ENCODE measurements at regions of chr5 and their contacts with region 1.

Region 1: DNA sequence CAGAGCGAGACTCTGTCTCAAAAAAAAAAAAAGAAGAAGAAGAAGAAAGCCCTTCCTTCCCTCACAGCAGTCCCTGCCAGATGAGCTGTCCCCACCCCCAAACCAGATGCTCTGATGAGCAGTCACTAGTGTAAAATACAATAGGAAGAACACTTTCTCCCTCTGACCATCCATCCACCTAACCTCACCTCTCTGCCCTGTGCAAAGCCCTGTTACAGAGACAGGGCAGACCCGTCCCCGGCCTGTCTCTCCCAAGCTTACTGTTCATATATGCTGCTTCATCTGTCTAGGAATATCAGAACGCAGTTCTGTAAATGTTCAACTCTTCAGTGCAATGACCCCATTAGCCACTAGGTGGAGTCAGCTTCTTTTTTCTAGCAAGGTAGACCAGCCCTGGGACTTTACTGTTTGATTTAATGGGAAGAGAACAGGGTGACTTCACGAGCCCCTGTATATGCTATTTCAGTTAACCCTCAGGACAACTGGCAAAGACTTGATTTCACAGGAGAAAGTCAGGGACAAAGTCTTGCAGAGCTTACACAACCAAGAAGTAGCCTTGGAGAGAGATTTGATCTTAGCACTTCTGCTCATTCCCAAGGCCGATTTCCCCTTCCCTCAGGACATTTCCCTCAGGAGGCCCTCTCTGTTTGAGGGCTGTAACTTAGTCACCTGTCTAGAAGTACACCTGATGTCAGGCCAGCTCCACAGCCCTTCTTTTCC is 14.9 kb upstream of the FGFR4 start:
- DNase-seq: peak; percentile 42
- H3K4me3 ChIP-seq: peak overlapping the region; percentile 30; the same call in 1 of the 2 replicates
- CTCF ChIP-seq: peak; percentile 72

Region 2: DNA sequence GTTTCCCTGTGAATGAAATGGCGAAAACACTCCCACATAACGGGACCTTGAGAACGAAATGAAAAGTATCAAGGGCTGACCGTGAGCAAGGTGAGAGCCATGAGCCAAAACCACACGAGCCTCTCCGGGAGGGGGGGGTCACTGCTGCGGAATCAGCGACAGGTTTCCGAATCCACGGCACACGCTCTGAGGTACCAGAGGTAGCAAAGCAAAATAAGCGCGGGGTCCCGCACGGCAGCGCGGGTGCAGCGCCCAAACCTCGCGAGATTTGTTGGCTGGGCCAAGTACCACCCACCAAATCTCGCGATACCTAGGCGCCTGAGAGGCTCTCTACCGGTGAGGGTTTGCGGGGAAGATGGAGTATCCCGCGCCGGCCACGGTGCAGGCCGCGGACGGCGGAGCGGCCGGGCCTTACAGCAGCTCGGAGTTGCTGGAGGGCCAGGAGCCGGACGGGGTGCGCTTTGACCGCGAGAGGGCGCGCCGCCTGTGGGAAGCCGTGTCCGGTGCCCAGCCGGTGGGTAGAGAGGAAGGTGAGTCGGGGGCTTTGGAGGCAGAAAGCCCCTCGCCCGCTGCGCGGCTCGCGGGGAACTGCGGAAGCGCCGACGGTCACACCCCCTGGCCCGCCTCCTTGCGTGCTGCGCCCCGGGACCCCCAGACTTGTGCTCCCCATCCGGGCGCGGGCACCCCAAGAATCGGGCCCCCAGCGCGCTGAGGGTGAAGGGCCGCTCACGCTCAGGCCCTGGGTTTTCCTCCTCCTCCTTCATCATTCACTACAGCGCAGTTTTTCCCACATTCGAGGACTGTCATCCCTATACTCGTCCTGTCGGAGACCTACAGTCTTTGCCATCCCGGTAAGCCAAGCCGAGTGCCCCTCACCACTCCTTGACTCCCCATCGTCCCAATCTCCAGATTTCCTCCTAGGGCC is 49.2 kb before region 1 on chr5 and contains the start of gene ZNF346:
- CTCF ChIA-PET with region 1: interaction called, 14 read pairs
- POLR2A ChIA-PET with region 1: no interaction called
- DNase-seq: no peak
- H3K4me3 ChIP-seq: peak within 1 kb of the TSS; percentile 93
- CTCF ChIP-seq: peak; percentile 38

Region 3: GRCh38 chr5:177043958-177044357 is 27.9 kb before region 1 on chr5:
- CTCF ChIA-PET with region 1: interaction called, 16 read pairs
- POLR2A ChIA-PET with region 1: no interaction called
- DNase-seq: no peak
- H3K4me3 ChIP-seq: no peak overlapping the region
- CTCF ChIP-seq: no peak

Region 4: DNA sequence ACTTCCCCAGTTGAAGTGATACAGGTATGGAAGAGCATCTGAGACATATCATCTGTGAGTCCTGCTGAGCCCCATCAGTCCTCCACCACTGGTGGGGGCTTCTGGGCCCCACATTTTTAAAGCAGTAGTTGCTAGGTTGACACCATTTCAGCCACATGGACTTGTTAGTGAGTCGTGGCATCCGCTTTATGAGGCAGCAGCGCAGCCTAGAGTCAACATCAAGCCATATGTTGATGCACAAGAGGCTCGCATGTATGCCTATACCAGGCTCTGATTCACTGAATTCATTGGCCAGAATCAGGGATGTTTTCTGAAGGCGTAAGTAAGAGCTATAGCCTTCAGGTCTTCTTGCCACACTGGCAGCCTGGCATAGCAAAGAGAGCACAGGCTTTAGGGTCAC is 22.5 kb before region 1 on chr5:
- CTCF ChIA-PET with region 1: interaction called, 18 read pairs
- POLR2A ChIA-PET with region 1: no interaction called
- DNase-seq: no peak
- H3K4me3 ChIP-seq: no peak overlapping the region
- CTCF ChIP-seq: no peak

Region 5: GRCh38 chr5:177086924-177087706 is 15.3 kb after region 1 on chr5:
- CTCF ChIA-PET with region 1: interaction called, 189 read pairs
- POLR2A ChIA-PET with region 1: no interaction called
- DNase-seq: no peak
- H3K4me3 ChIP-seq: peak overlapping the region; percentile 49
- CTCF ChIP-seq: peak; percentile 56

Region 6: GRCh38 chr5:177094224-177095087 is 22.6 kb after region 1 on chr5:
- CTCF ChIA-PET with region 1: interaction called, 189 read pairs
- POLR2A ChIA-PET with region 1: no interaction called
- DNase-seq: no peak
- H3K4me3 ChIP-seq: no peak overlapping the region
- CTCF ChIP-seq: no peak

Region 7: GRCh38 chr5:177103523-177104253 is 31.9 kb after region 1 on chr5:
- CTCF ChIA-PET with region 1: interaction called, 20 read pairs
- POLR2A ChIA-PET with region 1: no interaction called
- DNase-seq: no peak
- H3K4me3 ChIP-seq: no peak overlapping the region
- CTCF ChIP-seq: no peak